CD8-positive, alpha-beta T cell (primary cell): ENCODE measurements at regions of chr2 and their contacts with region 1.

Region 1: GRCh38 chr2:61888267-61889055 is at the start of gene CCT4:
- DNase-seq: peak; percentile 81 to 98 (median 92)
- ATAC-seq: peak; percentile 89
- H3K4me3 ChIP-seq: peak within 1 kb of the TSS; percentile 85 to 100
- H3K4me3 Mint-ChIP-seq: peak within 1 kb of the TSS; percentile 95
- H3K27ac ChIP-seq: peak within 1 kb of the TSS; percentile 99
- H3K27ac Mint-ChIP-seq: peak within 1 kb of the TSS; percentile 98
- H3K4me1 ChIP-seq: peaks cover 28% of the 10 kb centered on the region
- H3K4me1 Mint-ChIP-seq: peaks cover 33% of the 10 kb centered on the region
- H3K27me3 ChIP-seq: no peaks in the 10 kb centered on the region
- H3K27me3 Mint-ChIP-seq: no peaks in the 10 kb centered on the region
- CTCF ChIP-seq: no peak
- total RNA-seq, gene CCT4: 102 to 106 TPM

Region 2: DNA sequence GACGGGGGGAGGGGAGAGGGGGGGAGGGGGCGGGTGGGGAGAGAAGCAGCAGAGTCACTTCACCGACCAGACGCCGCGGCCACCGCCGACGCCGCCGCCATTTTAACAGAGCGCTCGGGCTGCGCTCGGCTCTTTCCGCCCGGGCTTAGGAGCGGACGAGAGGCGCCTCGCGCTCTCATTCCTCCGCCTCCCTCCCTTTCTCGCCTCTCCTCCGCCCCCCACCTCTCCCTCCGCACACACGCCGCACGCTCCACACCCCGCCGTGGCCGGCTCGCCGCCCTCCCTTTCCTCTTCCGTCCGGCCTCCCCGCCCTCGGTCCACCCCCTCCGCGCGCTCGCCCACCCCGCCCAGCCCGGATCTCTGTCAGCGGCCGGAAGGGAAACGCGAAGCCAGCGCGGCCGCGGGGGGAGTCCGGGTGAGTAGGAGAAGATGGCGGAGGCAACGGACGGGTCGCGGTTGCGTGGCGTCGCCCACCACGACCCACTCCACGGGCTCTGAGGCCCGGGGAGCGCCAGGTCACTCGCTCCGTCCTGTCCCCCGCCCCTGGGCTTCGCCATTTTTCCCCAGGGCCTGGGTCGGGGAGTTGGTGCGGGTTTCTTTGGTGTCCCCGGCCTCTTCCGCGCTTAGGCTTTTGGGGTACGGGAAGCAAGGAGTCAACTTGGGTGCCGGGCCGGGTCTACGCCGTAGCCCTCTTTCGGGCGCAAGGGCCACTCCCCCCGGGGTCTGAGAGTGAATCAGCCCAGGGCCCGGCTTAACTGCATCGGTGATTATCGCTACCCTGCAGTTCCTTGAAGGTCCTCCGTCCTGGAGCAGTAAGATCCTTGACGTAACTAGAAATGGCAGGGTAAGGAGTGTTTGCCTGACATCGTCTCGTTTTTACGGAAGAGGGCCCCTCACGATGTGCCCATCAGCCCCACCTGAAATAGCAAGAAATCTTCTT is 417.2 kb before region 1 on chr2 and contains the start of gene USP34:
- CTCF ChIA-PET with region 1: no interaction called
- POLR2A ChIA-PET with region 1: no interaction called
- intact Hi-C with region 1: loop called (anchors 1 to 5 kb)
- DNase-seq: peak; percentile 90 to 98 (median 93)
- ATAC-seq: peak; percentile 85
- H3K4me3 ChIP-seq: peak within 1 kb of the TSS; percentile 77 to 99
- H3K4me3 Mint-ChIP-seq: peak within 1 kb of the TSS; percentile 92
- H3K27ac ChIP-seq: peak within 1 kb of the TSS; percentile 89 to 100
- H3K27ac Mint-ChIP-seq: peak within 1 kb of the TSS; percentile 98
- H3K4me1 ChIP-seq: peaks cover 35% of the 10 kb centered on the region
- H3K4me1 Mint-ChIP-seq: peaks cover 34% of the 10 kb centered on the region
- H3K27me3 ChIP-seq: no peaks in the 10 kb centered on the region
- H3K27me3 Mint-ChIP-seq: no peaks in the 10 kb centered on the region
- CTCF ChIP-seq: no peak
- total RNA-seq, gene USP34: 99.6 to 103 TPM

Region 3: DNA sequence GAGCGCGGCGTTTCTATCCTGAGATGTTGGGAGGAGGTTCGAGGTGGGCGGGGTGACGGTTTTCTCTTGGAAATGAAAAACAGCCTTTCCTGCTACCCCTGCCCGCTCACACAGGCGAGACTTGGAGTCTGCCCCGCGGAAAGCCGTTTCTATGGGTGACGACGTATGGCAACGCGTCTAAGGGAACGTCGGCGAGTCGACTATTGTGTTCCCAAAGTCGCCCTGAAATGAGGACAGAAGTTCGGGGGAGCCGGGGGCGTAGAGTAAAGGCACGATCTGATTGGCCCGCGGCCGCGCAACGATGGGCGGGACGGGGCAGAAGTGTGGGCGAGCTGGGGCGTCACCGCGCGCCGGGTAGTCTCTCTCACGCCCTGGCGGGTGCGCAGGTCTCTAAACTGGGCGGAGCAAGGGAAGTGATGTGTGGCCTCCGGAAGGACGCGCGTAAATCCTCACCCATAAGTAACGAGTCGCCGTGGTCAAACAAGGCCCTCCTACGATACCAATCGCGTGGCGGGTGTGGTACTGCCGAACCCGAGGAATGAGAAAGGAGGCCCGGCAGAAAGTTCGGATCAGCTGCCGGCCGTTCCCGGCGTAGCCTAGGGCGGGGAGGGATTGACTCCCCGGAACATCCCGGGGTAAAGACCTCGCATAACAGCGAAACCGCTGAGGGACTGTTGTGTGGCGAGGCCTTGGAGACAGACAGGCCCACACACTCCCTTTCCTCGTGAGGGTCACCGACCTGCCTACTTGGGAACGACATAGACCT is 124.2 kb before region 1 on chr2:
- CTCF ChIA-PET with region 1: no interaction called
- POLR2A ChIA-PET with region 1: no interaction called
- intact Hi-C with region 1: loop called (anchors 1 to 5 kb)
- DNase-seq: peak; percentile 91 to 99 (median 94)
- ATAC-seq: peak; percentile 97
- H3K4me3 ChIP-seq: peak overlapping the region; percentile 90 to 91
- H3K4me3 Mint-ChIP-seq: peak overlapping the region; percentile 96
- H3K27ac ChIP-seq: peak overlapping the region; percentile 99 to 100
- H3K27ac Mint-ChIP-seq: peak overlapping the region; percentile 98
- H3K4me1 ChIP-seq: no peaks in the 10 kb centered on the region
- H3K4me1 Mint-ChIP-seq: peaks cover 12% of the 10 kb centered on the region
- H3K27me3 ChIP-seq: no peaks in the 10 kb centered on the region
- H3K27me3 Mint-ChIP-seq: no peaks in the 10 kb centered on the region
- CTCF ChIP-seq: no peak

Region 4: GRCh38 chr2:61905372-61906185 is 17.1 kb after region 1 on chr2 and contains the start of gene COMMD1:
- CTCF ChIA-PET with region 1: no interaction called
- POLR2A ChIA-PET with region 1: interaction called, 3 read pairs
- intact Hi-C with region 1: loop called in 1 of 2 experiments (anchors 1 kb)
- DNase-seq: peak; percentile 58 to 89 (median 79)
- ATAC-seq: peak; percentile 99
- H3K4me3 ChIP-seq: peak within 1 kb of the TSS; percentile 63 to 79
- H3K4me3 Mint-ChIP-seq: peak within 1 kb of the TSS; percentile 97
- H3K27ac ChIP-seq: peak within 1 kb of the TSS; percentile 43 to 59
- H3K27ac Mint-ChIP-seq: peak within 1 kb of the TSS; percentile 90
- H3K4me1 ChIP-seq: peaks cover 16% of the 10 kb centered on the region
- H3K4me1 Mint-ChIP-seq: peaks cover 34% of the 10 kb centered on the region
- H3K27me3 ChIP-seq: no peaks in the 10 kb centered on the region
- H3K27me3 Mint-ChIP-seq: no peaks in the 10 kb centered on the region
- CTCF ChIP-seq: no peak
- total RNA-seq, gene COMMD1: 8.8 to 11.2 TPM

Region 5: DNA sequence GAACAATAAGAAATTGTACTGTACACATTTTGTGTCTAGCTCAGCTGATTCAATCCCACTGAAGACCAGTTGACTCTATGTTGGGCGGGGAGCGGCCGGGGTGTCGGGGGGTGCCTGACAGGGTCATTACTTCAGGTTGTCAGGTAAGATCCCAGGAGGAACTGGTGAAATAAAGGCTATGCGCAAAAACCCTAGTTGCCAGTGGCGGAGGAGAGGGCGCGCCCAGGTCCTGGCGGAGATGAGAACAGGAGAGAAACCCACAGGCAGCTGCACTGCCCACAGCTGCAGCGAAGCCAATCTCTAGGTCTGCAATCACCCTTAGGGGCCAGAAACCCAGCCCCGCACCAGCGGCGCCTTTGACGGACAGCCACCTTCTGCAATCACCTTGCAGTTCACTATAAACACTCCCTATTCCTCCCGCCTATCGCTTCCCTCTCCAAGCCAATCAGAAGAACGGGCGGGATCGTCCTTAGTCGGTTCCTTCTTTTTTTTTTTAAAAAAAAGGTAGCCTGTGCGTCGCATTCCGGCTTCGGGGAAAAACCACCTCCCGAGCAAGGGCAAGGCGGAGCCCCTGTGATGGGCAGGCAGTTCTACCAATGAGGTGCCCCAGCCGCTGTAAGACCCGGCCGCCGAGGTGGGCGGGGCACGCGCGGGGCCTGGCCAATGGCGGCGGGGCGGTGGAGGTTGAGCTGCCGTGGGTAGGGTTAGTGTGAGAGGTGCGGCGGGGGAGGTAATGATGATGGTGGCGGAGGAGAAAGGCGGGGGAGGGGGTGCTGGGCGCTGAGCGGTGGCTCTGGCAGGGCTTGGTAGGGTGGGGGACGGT is 816.8 kb after region 1 on chr2 and contains the start of gene EHBP1:
- CTCF ChIA-PET with region 1: no interaction called
- POLR2A ChIA-PET with region 1: no interaction called
- intact Hi-C with region 1: loop called in 1 of 2 experiments (anchors 5 kb)
- DNase-seq: peak; percentile 93 to 99 (median 97)
- ATAC-seq: peak; percentile 96
- H3K4me3 ChIP-seq: peak within 1 kb of the TSS; percentile 74 to 77
- H3K4me3 Mint-ChIP-seq: peak within 1 kb of the TSS; percentile 85
- H3K27ac ChIP-seq: peak within 1 kb of the TSS; percentile 36 to 65
- H3K27ac Mint-ChIP-seq: peak within 1 kb of the TSS; percentile 79
- H3K4me1 ChIP-seq: peaks cover 11% of the 10 kb centered on the region
- H3K4me1 Mint-ChIP-seq: peaks cover 41% of the 10 kb centered on the region
- H3K27me3 ChIP-seq: no peaks in the 10 kb centered on the region
- H3K27me3 Mint-ChIP-seq: no peaks in the 10 kb centered on the region
- CTCF ChIP-seq: no peak
- total RNA-seq, gene EHBP1: 16.2 to 16.7 TPM